HEK293T (cell line): ENCODE measurements at regions of chrX and their contacts with region 1.

Region 1: GRCh38 chrX:103845165-103845653 is 13.2 kb upstream of the RAB9B start:
- DNase-seq: peak; percentile 85

Region 2: GRCh38 chrX:103831803-103832544 is 13.2 kb before region 1 on chrX and contains the start of gene RAB9B:
- CTCF ChIA-PET with region 1: interaction called, 25 read pairs
- POLR2A ChIA-PET with region 1: interaction called, 6 read pairs
- DNase-seq: peak; percentile 91

Region 3: DNA sequence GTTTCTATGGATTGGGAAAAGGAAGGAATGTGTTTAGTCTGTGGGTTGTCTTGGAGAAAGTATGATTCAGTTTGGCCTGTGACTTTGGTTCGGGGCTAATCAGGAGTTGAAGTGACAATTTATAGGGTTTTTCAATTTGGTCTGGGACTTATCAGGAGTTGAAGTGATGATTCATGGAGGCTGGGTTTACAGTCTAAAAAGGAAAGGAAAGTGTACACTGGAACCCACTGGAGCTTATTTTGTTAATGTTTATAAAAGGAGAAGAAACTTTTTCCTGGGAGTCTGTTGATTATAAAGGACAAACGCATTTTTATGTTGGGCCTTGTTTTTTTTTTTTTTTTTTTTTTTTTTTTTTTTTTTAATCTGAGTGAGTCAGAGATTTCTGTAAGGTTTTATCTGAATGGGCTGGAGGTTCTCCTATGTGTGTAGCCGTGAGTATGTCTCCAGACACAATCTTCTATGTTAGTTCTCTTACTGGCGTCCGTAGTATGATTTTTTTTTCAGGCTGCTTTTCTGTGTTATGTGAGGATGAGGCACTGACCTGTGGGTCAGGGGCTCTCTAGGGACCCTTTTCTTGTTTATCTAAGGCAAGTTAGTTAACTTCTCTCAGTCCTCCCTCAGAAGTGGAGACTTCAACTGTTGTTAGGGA is 19.8 kb after region 1 on chrX:
- CTCF ChIA-PET with region 1: interaction called, 25 read pairs
- POLR2A ChIA-PET with region 1: no interaction called
- DNase-seq: no peak

Region 4: DNA sequence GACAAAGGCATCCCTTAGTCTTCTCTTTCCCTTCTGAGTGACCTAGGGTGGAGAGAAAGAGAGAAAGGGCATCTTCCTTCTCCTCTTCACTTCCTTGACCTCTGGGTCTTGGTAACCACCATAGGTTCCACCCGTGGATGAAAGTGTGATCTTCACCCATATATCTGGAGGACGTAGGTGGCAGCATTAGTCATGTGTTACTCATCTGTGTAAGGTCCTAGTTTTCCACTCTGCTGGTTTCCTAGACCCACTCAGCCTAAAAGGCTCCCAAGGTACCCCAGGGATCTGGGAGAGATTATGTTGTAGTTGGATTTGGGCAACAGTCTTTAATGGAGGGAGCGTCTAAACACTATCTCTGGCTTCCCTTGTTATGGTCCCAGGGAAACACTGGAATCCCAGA is 32.4 kb after region 1 on chrX:
- CTCF ChIA-PET with region 1: no interaction called
- POLR2A ChIA-PET with region 1: no interaction called
- DNase-seq: no peak

Region 5: DNA sequence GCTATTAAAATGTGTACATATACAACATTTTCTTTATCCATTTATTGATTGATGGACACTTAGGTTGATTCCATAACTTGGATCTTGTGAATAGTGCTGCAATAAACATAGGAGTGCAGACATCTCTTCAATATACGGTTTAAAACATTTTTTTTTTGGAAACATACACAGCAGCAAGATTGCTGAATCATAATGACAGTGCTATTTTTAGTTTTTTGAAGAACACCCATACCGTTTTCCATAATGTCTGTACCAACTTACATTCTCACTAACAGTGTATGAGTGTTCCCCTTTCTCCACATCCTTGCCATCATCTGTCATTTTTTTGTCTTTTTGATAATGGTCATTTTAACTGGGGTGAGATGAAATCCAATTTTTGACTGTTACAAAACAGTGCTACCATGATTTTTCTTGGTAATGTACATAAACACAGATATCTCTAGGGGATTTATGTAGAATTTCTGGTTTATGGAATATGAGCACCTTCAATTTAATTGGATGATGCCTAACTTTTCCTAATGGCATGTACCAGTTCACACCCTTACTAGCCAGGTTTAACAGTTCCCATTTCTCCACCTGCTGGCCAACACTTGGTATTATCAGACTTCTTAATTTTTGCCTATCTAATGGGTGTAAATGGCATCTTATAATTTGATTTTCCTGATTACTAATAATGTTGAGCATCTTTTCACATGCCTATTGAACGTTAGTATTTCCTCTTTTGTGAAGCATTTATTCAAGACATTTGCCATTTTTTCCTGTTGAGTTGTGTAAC is 96.2 kb after region 1 on chrX:
- CTCF ChIA-PET with region 1: interaction called, 18 read pairs
- POLR2A ChIA-PET with region 1: interaction called, 3 read pairs
- DNase-seq: peak; percentile 34